ENCODE measurements at regions of chr6 and their contacts with region 1.

Region 1: GRCh38 chr6:138428944-138429598 is 25.0 kb downstream of the HEBP2 start:
- DNase-seq: no peak
- ATAC-seq: no peak
- H3K4me3 Mint-ChIP-seq: no peak overlapping the region
- H3K27ac Mint-ChIP-seq: no peak overlapping the region
- H3K4me1 Mint-ChIP-seq: peaks cover 6% of the 10 kb centered on the region
- H3K27me3 Mint-ChIP-seq: peaks cover 3% of the 10 kb centered on the region
- CTCF ChIP-seq: no peak

Region 2: DNA sequence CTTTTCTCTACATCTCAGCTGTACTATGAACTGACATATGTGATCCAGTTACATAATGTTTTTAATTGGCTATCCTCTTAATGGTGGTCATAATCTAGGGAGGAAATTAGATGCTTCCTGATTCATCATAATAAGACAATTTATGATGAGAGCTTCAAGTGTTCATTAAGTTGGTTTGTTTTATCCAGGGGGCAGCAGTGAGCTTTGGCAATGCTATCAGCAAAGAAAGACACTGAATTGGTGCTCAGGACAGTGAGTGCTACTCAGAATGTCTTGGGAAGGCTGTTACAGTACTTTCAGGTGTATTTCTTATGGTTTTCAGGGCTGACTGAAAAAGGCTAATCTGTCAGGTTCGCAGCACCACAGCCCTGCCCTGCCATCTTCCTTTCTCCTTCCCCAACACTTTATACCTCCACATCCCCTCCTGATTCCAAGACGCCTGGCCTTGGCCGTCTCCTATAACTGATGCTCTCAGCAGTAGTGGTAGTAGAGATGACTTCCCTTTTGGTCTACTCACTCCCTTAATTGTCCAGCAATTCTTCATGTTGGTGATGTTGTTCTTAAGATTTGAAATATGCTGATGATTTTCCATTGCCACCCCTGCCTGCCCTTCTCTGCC is 629.0 kb before region 1 on chr6:
- CTCF ChIA-PET with region 1: no interaction called
- POLR2A ChIA-PET with region 1: no interaction called
- intact Hi-C with region 1: no loop called
- DNase-seq: no peak
- ATAC-seq: peak; percentile 91
- H3K4me3 Mint-ChIP-seq: no peak overlapping the region
- H3K27ac Mint-ChIP-seq: peak overlapping the region; percentile 65
- H3K4me1 Mint-ChIP-seq: peaks cover 29% of the 10 kb centered on the region
- H3K27me3 Mint-ChIP-seq: no peaks in the 10 kb centered on the region
- CTCF ChIP-seq: no peak

Region 3: GRCh38 chr6:138115877-138116660 is 313.0 kb before region 1 on chr6:
- CTCF ChIA-PET with region 1: interaction called, 5 read pairs
- POLR2A ChIA-PET with region 1: no interaction called
- intact Hi-C with region 1: loop called (anchors 1 kb)
- DNase-seq: no peak
- ATAC-seq: peak; percentile 85
- H3K4me3 Mint-ChIP-seq: no peak overlapping the region
- H3K27ac Mint-ChIP-seq: no peak overlapping the region
- H3K4me1 Mint-ChIP-seq: peaks cover 6% of the 10 kb centered on the region
- H3K27me3 Mint-ChIP-seq: peaks cover 26% of the 10 kb centered on the region
- CTCF ChIP-seq: peak; percentile 61

Region 4: DNA sequence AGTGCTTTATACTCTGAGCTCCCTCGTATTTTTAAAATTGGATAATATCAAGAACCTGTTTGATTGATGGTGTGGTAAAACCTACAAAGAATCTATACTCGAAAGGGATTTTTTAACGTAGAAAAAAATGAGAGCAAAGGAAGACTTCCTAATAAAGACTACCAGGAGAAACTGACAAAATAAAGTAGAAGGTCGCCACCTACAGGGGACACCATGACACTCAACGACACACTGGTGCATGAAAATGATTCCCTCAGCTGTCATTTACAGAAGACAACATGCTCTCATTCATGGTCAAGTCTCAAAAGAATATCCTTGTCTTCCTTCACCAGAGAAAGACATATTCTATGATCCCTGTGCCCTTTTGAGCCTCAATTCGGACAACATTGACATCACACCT is 80.3 kb after region 1 on chr6:
- CTCF ChIA-PET with region 1: interaction called, 59 read pairs
- POLR2A ChIA-PET with region 1: no interaction called
- intact Hi-C with region 1: loop called (anchors 1 kb)
- DNase-seq: no peak
- ATAC-seq: no peak
- H3K4me3 Mint-ChIP-seq: no peak overlapping the region
- H3K27ac Mint-ChIP-seq: no peak overlapping the region
- H3K4me1 Mint-ChIP-seq: peaks cover 2% of the 10 kb centered on the region
- H3K27me3 Mint-ChIP-seq: peaks cover 15% of the 10 kb centered on the region
- CTCF ChIP-seq: no peak

Region 5: DNA sequence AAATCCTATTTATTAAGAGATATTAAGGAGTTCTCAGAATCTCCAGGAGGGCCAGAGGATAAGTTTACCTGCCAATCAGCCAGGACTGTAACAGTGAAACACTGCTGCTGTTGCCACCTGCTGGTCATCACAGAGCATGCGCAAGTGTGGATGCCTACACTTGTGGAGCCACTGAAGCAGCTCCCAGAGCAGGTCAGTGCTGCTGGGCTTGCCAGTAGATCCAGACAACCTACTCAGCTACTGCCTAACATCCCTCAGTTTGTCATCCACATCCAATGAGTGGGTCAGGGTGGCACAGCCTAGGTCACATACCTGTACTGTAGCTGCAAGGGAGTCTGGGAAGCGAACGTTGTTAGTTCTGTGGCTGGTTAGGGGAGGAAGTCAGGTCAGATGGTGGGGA is 88.6 kb after region 1 on chr6:
- CTCF ChIA-PET with region 1: interaction called, 70 read pairs
- POLR2A ChIA-PET with region 1: no interaction called
- intact Hi-C with region 1: loop called (anchors 1 kb)
- DNase-seq: peak; percentile 24
- ATAC-seq: peak; percentile 84
- H3K4me3 Mint-ChIP-seq: no peak overlapping the region
- H3K27ac Mint-ChIP-seq: no peak overlapping the region
- H3K4me1 Mint-ChIP-seq: no peaks in the 10 kb centered on the region
- H3K27me3 Mint-ChIP-seq: peaks cover 20% of the 10 kb centered on the region
- CTCF ChIP-seq: peak; percentile 58

Region 6: DNA sequence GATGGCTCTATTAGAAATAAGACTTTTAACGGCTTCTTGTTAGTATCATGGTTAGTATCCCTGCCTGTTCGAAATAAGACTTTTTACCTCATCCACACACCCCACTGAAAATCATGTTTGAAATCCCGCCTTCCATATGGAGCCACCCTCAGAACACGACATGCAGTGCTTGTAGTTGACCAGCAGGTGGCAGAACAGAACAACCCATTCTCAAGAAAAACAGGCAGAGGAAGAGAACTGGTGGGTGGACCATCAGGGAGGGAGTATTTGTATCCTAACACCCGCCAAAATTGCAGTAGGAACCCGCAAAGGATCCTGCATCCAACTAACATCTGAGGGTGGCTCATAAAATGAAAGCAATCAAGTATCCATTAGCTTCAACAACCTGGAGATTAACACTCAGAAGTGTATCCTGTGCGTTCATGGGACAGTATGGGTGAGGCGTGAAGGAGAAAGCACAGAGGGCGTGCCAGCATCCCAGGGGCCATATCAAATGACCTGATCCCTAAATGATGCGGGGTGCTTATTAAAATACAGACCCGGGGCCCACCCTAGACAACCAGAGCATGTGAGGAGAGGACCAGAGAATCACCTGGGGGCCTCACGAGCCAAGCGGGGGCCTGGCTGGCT is 159.8 kb after region 1 on chr6:
- CTCF ChIA-PET with region 1: no interaction called
- POLR2A ChIA-PET with region 1: no interaction called
- intact Hi-C with region 1: loop called (anchors 1 kb)
- DNase-seq: no peak
- ATAC-seq: peak; percentile 48
- H3K4me3 Mint-ChIP-seq: no peak overlapping the region
- H3K27ac Mint-ChIP-seq: no peak overlapping the region
- H3K4me1 Mint-ChIP-seq: peaks cover 27% of the 10 kb centered on the region
- H3K27me3 Mint-ChIP-seq: no peaks in the 10 kb centered on the region
- CTCF ChIP-seq: peak; percentile 71

Region 7: DNA sequence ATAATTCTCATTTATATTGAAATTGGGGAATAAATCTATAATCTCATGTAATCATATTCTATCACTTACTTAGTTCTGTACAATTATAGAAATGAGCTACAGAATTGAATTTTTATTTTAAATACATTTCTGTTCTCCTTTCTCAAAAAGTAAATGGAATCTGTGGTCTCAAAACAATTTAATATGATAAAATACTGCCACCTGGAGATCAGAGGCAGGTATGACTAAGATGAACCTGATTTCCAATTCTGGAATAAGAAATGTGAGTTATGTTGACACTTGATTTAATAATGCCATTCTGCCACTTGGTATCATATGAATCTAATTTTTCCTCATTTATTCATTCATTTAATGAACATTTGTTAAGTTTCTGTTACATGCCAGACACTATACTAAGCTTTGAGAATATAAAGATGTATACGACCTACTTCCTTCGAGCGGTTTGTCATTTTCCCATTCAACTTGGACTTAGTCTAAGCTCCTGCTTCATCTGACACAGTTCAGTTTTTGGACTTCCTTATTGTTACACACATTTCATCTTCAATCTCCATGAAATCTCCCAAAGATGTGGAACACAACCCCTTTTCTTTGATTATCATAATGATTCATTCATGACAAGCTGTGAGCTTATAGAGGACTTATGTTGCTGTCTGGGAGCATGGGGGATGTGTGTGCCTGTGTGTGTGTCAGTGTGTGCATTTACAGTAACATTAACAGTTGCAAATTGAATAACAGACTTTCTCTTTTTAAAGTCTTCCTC is 337.0 kb after region 1 on chr6:
- CTCF ChIA-PET with region 1: interaction called, 3 read pairs
- POLR2A ChIA-PET with region 1: no interaction called
- intact Hi-C with region 1: loop called (anchors 1 kb)
- DNase-seq: no peak
- ATAC-seq: no peak
- H3K4me3 Mint-ChIP-seq: no peak overlapping the region
- H3K27ac Mint-ChIP-seq: no peak overlapping the region
- H3K4me1 Mint-ChIP-seq: peaks cover 10% of the 10 kb centered on the region
- H3K27me3 Mint-ChIP-seq: no peaks in the 10 kb centered on the region
- CTCF ChIP-seq: peak; percentile 64

Region 8: GRCh38 chr6:139080255-139080920 is 651.3 kb after region 1 on chr6:
- CTCF ChIA-PET with region 1: no interaction called
- POLR2A ChIA-PET with region 1: interaction called, 11 read pairs
- intact Hi-C with region 1: no loop called
- DNase-seq: no peak
- ATAC-seq: no peak
- H3K4me3 Mint-ChIP-seq: no peak overlapping the region
- H3K27ac Mint-ChIP-seq: no peak overlapping the region
- H3K4me1 Mint-ChIP-seq: no peaks in the 10 kb centered on the region
- H3K27me3 Mint-ChIP-seq: no peaks in the 10 kb centered on the region
- CTCF ChIP-seq: no peak